ENCODE measurements at regions of chr18 and their contacts with region 1.

Region 1: DNA sequence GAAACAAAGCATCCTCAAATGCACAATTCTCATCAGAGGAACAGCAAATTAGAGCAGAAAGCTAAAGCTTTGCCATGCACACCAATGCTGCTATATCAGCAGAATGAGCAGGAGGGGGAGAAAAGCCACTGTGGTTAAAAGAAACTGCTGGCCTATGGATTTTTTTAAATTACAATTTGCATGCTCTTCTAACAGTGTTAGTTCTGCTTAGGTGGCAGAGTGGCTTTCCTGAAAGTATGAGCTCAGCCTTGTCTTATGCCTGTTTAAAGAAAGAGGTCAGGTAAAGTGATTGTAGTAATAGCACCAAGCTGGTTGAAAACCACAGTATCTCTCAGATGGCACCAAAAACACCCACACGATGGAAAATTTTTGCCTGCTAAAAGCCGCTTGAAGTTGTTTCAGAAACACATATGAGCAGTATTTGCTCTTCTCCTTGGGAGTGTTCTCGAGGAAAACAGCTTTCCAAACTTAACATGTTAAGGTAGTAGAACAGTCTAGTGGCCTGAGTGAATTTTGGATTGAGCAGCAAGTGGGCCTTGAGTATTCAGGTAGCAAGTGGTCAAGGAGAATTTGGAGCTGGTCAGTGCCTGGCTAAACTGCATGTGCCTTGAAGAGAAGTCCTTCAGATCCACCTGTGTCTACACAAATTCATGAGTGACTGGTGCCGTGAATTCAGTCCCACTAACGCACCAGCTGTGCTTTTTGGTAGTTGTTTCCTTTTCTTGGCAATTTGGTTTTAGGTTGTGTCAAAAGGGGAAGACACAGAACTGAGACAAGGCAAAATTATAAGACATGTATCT is 19.6 kb upstream of the NDUFV2 start:
- DNase-seq: peak in 6 of 14 experiments; percentile 8 to 78 (median 52)
- ATAC-seq: peak; percentile 85
- H3K4me3 ChIP-seq: peak overlapping the region; percentile 1
- H3K4me3 Mint-ChIP-seq: peak overlapping the region; percentile 69
- H3K27ac ChIP-seq: peak overlapping the region; percentile 60 to 68
- H3K27ac Mint-ChIP-seq: peak overlapping the region; percentile 88
- H3K4me1 ChIP-seq: peaks cover 33% of the 10 kb centered on the region
- H3K4me1 Mint-ChIP-seq: peaks cover 28% of the 10 kb centered on the region
- H3K27me3 ChIP-seq: no peaks in the 10 kb centered on the region
- H3K27me3 Mint-ChIP-seq: no peaks in the 10 kb centered on the region
- CTCF ChIP-seq: no peak

Region 2: GRCh38 chr18:8912348-8913326 is 170.3 kb before region 1 on chr18:
- CTCF ChIA-PET with region 1: no interaction called
- POLR2A ChIA-PET with region 1: no interaction called
- intact Hi-C with region 1: no loop called
- DNase-seq: no peak
- ATAC-seq: no peak
- H3K4me3 ChIP-seq: no peak overlapping the region
- H3K4me3 Mint-ChIP-seq: no peak overlapping the region
- H3K27ac ChIP-seq: no peak overlapping the region
- H3K27ac Mint-ChIP-seq: no peak overlapping the region
- H3K4me1 ChIP-seq: no peaks in the 10 kb centered on the region
- H3K4me1 Mint-ChIP-seq: no peaks in the 10 kb centered on the region
- H3K27me3 ChIP-seq: no peaks in the 10 kb centered on the region
- H3K27me3 Mint-ChIP-seq: no peaks in the 10 kb centered on the region
- CTCF ChIP-seq: no peak

Region 3: GRCh38 chr18:9038277-9038871 is 44.5 kb before region 1 on chr18:
- CTCF ChIA-PET with region 1: no interaction called
- POLR2A ChIA-PET with region 1: no interaction called
- intact Hi-C with region 1: no loop called
- DNase-seq: no peak
- ATAC-seq: no peak
- H3K4me3 ChIP-seq: no peak overlapping the region
- H3K4me3 Mint-ChIP-seq: no peak overlapping the region
- H3K27ac ChIP-seq: no peak overlapping the region
- H3K27ac Mint-ChIP-seq: no peak overlapping the region
- H3K4me1 ChIP-seq: no peaks in the 10 kb centered on the region
- H3K4me1 Mint-ChIP-seq: no peaks in the 10 kb centered on the region
- H3K27me3 ChIP-seq: peaks cover 0 to 2% of the 10 kb centered on the region in 2 experiments
- H3K27me3 Mint-ChIP-seq: no peaks in the 10 kb centered on the region
- CTCF ChIP-seq: no peak

Region 4: GRCh38 chr18:9095297-9096006 is 12.5 kb after region 1 on chr18:
- CTCF ChIA-PET with region 1: interaction called, 7 read pairs
- POLR2A ChIA-PET with region 1: interaction called, 55 read pairs
- intact Hi-C with region 1: no loop called
- DNase-seq: peak in 11 of 14 experiments; percentile 29 to 82 (median 47)
- ATAC-seq: peak; percentile 55
- H3K4me3 ChIP-seq: peak overlapping the region; percentile 4
- H3K4me3 Mint-ChIP-seq: peak overlapping the region; percentile 64
- H3K27ac ChIP-seq: peak overlapping the region; percentile 33 to 74
- H3K27ac Mint-ChIP-seq: peak overlapping the region; percentile 80
- H3K4me1 ChIP-seq: peaks cover 45% of the 10 kb centered on the region
- H3K4me1 Mint-ChIP-seq: peaks cover 59% of the 10 kb centered on the region
- H3K27me3 ChIP-seq: no peaks in the 10 kb centered on the region
- H3K27me3 Mint-ChIP-seq: no peaks in the 10 kb centered on the region
- CTCF ChIP-seq: no peak

Region 5: GRCh38 chr18:9102508-9103375 is 19.8 kb after region 1 on chr18 and contains the start of gene NDUFV2:
- CTCF ChIA-PET with region 1: interaction called, 8 read pairs
- POLR2A ChIA-PET with region 1: interaction called, 55 read pairs
- intact Hi-C with region 1: no loop called
- DNase-seq: peak; percentile 93 to 99 (median 98)
- ATAC-seq: peak; percentile 87
- H3K4me3 ChIP-seq: peak within 1 kb of the TSS; percentile 74
- H3K4me3 Mint-ChIP-seq: peak within 1 kb of the TSS; percentile 95
- H3K27ac ChIP-seq: peak within 1 kb of the TSS; percentile 82 to 91
- H3K27ac Mint-ChIP-seq: peak within 1 kb of the TSS; percentile 90
- H3K4me1 ChIP-seq: peaks cover 22% of the 10 kb centered on the region
- H3K4me1 Mint-ChIP-seq: peaks cover 65% of the 10 kb centered on the region
- H3K27me3 ChIP-seq: no peaks in the 10 kb centered on the region
- H3K27me3 Mint-ChIP-seq: no peaks in the 10 kb centered on the region
- CTCF ChIP-seq: no peak
- total RNA-seq, gene NDUFV2: 230 to 231 TPM

Region 6: GRCh38 chr18:9204659-9205058 is 121.7 kb after region 1 on chr18:
- CTCF ChIA-PET with region 1: no interaction called
- POLR2A ChIA-PET with region 1: no interaction called
- intact Hi-C with region 1: loop called in 1 of 2 experiments (anchors 5 kb)
- DNase-seq: no peak
- ATAC-seq: no peak
- H3K4me3 ChIP-seq: no peak overlapping the region
- H3K4me3 Mint-ChIP-seq: no peak overlapping the region
- H3K27ac ChIP-seq: no peak overlapping the region
- H3K27ac Mint-ChIP-seq: peak overlapping the region; percentile 56
- H3K4me1 ChIP-seq: no peaks in the 10 kb centered on the region
- H3K4me1 Mint-ChIP-seq: peaks cover 20% of the 10 kb centered on the region
- H3K27me3 ChIP-seq: no peaks in the 10 kb centered on the region
- H3K27me3 Mint-ChIP-seq: no peaks in the 10 kb centered on the region
- CTCF ChIP-seq: no peak